Ovary (tissue), 10 donors: ENCODE measurements at regions of chr11 and their contacts with region 1.

Region 1: GRCh38 chr11:61392981-61393595 is 701 bp downstream of the TMEM216 start:
- DNase-seq: no peak
- H3K4me3 ChIP-seq: peak overlapping the region; percentile 76
- H3K27ac ChIP-seq: peak overlapping the region; percentile 18 to 49
- H3K4me1 ChIP-seq: peaks cover 10% of the 10 kb centered on the region
- H3K27me3 ChIP-seq: no peaks in the 10 kb centered on the region
- CTCF ChIP-seq: no peak
- EP300 ChIP-seq: no peak
- POLR2A ChIP-seq: no peak

Region 2: DNA sequence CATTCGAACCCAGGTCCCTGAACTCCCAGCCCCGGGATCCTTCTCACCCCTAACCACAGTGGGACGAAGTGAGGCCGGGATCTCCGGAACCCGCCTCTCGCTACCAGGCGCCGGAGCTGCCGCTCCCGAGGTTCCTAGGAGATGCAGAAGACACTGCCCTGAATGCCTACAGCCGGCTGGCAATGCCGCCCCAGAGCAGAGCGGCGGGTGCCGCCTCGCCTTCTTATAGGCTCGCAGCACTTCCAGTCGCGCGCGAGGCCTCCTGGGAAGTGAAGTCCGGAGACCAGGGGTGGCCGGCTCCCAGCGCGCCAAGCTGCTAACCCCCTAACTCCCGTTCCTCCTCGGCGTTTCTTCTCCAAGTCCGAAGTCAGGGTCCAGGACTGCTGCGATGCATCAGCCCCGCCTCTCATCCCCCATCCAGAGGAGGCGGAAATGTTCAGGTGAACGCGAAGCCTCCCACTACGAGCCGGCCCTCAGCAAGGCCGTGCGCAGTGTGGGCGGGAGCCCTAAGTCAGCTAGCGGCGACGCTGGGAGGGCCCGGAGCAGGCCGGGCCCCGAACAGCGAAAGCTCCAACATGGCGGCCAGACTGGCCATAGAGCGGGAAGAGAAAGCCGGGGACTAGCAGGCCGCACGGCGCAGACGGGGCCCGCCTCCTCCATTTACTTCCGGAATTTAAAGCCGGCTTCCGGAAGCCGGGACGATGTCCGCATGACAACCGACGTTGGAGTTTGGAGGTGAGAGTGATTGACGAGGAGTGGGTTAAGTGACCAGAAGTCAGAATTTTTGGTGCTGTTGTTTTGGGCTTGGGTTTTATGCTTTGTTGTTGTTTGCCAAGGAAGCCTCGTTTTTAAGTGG is 31.2 kb before region 1 on chr11 and contains the starts of genes CYB561A3 and TMEM138:
- intact Hi-C with region 1: loop called in 1 of 4 experiments (anchors 1 kb)
- DNase-seq: peak; percentile 88 to 92 (median 90)
- H3K4me3 ChIP-seq: peak within 1 kb of the TSS; percentile 61
- H3K27ac ChIP-seq: peak within 1 kb of the TSS; percentile 93 to 100
- H3K4me1 ChIP-seq: peaks cover 2% of the 10 kb centered on the region
- H3K27me3 ChIP-seq: no peaks in the 10 kb centered on the region
- CTCF ChIP-seq: no peak
- EP300 ChIP-seq: no peak
- POLR2A ChIP-seq: peak; percentile 54
- total RNA-seq, gene CYB561A3: 24.1 to 58.3 (median 44.1) TPM
- total RNA-seq, gene TMEM138: 21.5 to 102 (median 53.4) TPM

Region 3: GRCh38 chr11:61378713-61379313 is 14.3 kb before region 1 on chr11:
- intact Hi-C with region 1: no loop called
- DNase-seq: peak in 3 of 5 donors; percentile 56 to 80 (median 69)
- H3K4me3 ChIP-seq: no peak overlapping the region
- H3K27ac ChIP-seq: peak overlapping the region in 1 of 2 donors; percentile 68
- H3K4me1 ChIP-seq: peaks cover 8% of the 10 kb centered on the region
- H3K27me3 ChIP-seq: no peaks in the 10 kb centered on the region
- CTCF ChIP-seq: no peak
- EP300 ChIP-seq: peak; percentile 46
- POLR2A ChIP-seq: no peak